ENCODE measurements at regions of chr1 and their contacts with region 1.

Region 1: GRCh38 chr1:63593303-63593885 is at the start of gene PGM1:
- DNase-seq: peak; percentile 67
- ATAC-seq: peak; percentile 79
- H3K4me3 Mint-ChIP-seq: peak within 1 kb of the TSS; percentile 97
- H3K27ac Mint-ChIP-seq: peak within 1 kb of the TSS; percentile 92
- H3K4me1 Mint-ChIP-seq: peaks cover 14% of the 10 kb centered on the region
- H3K27me3 Mint-ChIP-seq: no peaks in the 10 kb centered on the region
- CTCF ChIP-seq: no peak
- total RNA-seq, gene PGM1: 20.6 and 20.8 TPM in 2 replicates

Region 2: DNA sequence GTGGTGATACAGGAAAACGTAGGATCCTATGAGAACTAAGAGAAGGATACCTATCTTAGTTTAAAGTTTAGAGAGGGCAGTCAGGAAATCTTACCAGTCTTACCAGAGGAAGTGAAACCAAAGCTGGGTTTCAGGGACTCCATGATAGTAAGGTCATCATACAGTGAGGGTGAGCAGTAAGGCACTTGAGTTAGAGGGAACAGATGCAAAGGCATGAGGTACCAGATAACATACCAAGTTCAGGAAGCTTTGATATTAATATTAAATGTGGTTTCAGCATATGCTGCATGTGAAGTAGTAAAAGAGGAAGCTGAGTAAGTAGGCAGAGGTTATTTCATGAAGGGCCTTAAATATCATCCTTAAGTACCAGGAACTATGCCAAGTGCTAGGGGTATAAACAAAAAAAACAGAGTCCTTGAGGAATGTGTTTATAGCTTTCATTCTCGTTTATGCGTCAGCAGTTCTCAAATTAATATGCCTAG is 792.5 kb before region 1 on chr1:
- CTCF ChIA-PET with region 1: no interaction called
- POLR2A ChIA-PET with region 1: no interaction called
- intact Hi-C with region 1: loop called (anchors 5 kb)
- DNase-seq: no peak
- ATAC-seq: peak; percentile 98
- H3K4me3 Mint-ChIP-seq: peak overlapping the region; percentile 78
- H3K27ac Mint-ChIP-seq: peak overlapping the region; percentile 95
- H3K4me1 Mint-ChIP-seq: peaks cover 61% of the 10 kb centered on the region
- H3K27me3 Mint-ChIP-seq: no peaks in the 10 kb centered on the region
- CTCF ChIP-seq: no peak

Region 3: DNA sequence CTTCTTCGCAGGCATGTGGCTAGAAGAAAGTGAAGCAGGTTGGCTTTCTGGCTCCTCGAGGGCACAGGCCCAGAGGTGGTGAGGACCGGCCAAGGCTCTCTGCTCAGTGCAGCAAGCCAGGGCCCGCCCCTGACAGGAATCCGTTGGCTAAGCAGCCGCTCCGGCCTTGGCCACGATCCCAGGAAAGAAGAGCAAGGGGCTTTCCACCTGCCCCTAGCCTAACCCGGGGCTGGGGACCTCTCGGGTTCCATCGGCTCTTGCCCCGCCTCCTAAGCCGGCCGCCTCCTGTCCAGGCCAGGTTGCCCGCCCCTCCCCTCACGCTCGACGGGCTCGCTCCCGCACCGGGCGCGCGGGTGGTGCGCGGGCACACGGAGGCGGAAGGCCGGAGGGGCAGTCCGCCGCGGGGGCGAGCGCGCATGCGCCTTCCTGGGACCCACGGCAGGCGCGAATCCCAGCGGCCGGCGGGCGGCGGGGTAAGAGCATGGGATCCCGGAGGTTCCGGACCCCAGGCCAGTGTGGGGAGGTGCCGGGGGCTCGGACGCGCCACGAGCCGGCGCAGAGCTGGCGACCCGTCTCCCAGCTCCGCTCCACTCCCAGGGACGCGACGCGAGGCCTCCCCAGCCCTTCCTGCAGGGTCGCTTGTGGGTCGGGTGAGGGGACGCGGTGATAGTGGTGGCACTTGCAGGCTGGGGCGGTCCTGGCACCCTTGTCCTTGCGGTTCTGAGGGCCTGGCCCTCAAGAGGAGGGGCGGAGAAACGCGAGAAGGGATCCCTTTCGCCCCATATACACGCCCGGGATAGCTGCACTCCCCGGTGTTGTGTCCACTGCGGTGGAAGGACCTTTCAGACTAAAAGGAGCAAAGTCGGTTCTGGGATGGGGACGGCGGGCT is 225.9 kb before region 1 on chr1 and contains the start of gene ALG6:
- CTCF ChIA-PET with region 1: no interaction called
- POLR2A ChIA-PET with region 1: no interaction called
- intact Hi-C with region 1: loop called (anchors 1 kb)
- DNase-seq: peak; percentile 100
- ATAC-seq: peak; percentile 92
- H3K4me3 Mint-ChIP-seq: peak within 1 kb of the TSS; percentile 98
- H3K27ac Mint-ChIP-seq: peak within 1 kb of the TSS; percentile 86
- H3K4me1 Mint-ChIP-seq: peaks cover 21% of the 10 kb centered on the region
- H3K27me3 Mint-ChIP-seq: peaks cover 9% of the 10 kb centered on the region
- CTCF ChIP-seq: no peak
- total RNA-seq, gene ALG6: 20.0 and 21.5 TPM in 2 replicates

Region 4: DNA sequence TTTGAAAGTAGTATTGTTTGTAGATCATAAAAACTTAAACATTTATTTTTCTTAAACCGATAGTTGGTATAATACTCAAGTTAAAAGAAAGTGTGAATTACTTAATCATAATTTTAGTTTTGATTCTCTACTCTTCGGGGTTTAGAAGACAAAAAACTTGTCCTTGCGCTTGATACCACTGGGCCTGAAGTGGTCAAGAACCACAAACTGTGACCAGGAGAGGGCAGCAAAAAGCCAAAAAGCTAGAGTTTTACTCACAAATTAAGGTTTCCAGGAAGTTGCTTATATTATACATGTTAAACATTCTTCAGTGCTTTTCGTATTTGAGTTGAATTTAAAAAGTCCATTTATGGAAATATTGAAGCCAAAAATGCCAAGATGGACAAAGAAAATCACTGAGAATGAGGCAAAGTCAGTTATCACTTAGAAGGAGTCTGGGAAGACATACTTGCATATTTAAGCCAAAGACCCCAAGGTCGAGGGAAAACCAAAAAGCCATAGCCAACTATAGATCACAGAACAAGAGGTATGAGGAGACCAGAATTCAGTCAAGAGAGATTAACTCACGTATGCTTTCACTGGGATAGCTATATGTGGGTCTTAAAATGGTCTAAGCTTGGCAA is 35.9 kb before region 1 on chr1:
- CTCF ChIA-PET with region 1: no interaction called
- POLR2A ChIA-PET with region 1: no interaction called
- intact Hi-C with region 1: no loop called
- DNase-seq: no peak
- ATAC-seq: no peak
- H3K4me3 Mint-ChIP-seq: no peak overlapping the region
- H3K27ac Mint-ChIP-seq: no peak overlapping the region
- H3K4me1 Mint-ChIP-seq: no peaks in the 10 kb centered on the region
- H3K27me3 Mint-ChIP-seq: no peaks in the 10 kb centered on the region
- CTCF ChIP-seq: no peak

Region 5: DNA sequence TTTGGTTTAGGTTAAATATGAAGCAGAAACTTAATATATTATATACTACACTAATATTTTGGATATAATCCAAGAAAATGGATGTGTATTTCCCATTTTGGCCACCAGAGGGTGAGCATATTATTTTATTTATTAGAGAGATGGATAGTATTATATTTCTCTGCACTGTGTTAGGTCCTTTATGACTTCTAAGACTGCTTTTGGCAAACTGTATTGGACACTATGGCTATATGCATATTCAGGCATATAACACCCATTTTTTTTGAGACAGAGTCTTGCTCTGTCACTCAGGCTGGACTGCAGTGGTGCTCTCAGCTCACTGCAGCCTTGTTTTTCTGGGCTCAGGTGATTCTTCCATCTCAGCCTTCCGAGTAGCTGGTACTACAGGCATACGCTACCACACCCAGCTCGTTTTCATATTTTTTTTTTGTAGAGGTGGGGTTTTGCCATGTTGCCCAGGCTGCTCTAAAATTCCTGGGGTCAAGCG is 18.0 kb before region 1 on chr1:
- CTCF ChIA-PET with region 1: interaction called, 6 read pairs
- POLR2A ChIA-PET with region 1: no interaction called
- intact Hi-C with region 1: loop called (anchors 1 kb)
- DNase-seq: no peak
- ATAC-seq: no peak
- H3K4me3 Mint-ChIP-seq: no peak overlapping the region
- H3K27ac Mint-ChIP-seq: no peak overlapping the region
- H3K4me1 Mint-ChIP-seq: no peaks in the 10 kb centered on the region
- H3K27me3 Mint-ChIP-seq: no peaks in the 10 kb centered on the region
- CTCF ChIP-seq: peak; percentile 67

Region 6: DNA sequence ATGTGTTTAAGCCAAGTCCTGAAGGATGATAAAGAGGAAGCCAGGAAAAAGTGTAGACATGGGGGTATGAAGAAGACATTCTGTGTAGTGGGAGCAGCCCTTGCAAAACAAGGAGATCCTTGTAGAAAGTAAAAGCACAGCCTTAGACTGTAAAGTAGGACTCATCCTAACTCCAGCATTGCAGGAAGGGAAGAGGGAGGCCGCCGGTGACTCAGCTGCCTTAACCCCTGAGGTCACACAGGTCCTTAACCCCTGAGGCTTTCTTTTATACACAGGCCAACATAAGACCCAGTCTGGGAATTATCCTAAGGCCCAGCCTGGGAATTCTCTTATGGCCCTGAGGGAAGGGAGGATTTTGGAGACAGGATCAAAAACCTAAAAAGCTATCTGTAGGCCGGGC is 17.8 kb after region 1 on chr1:
- CTCF ChIA-PET with region 1: no interaction called
- POLR2A ChIA-PET with region 1: no interaction called
- intact Hi-C with region 1: no loop called
- DNase-seq: no peak
- ATAC-seq: no peak
- H3K4me3 Mint-ChIP-seq: no peak overlapping the region
- H3K27ac Mint-ChIP-seq: no peak overlapping the region
- H3K4me1 Mint-ChIP-seq: no peaks in the 10 kb centered on the region
- H3K27me3 Mint-ChIP-seq: no peaks in the 10 kb centered on the region
- CTCF ChIP-seq: no peak

Region 7: DNA sequence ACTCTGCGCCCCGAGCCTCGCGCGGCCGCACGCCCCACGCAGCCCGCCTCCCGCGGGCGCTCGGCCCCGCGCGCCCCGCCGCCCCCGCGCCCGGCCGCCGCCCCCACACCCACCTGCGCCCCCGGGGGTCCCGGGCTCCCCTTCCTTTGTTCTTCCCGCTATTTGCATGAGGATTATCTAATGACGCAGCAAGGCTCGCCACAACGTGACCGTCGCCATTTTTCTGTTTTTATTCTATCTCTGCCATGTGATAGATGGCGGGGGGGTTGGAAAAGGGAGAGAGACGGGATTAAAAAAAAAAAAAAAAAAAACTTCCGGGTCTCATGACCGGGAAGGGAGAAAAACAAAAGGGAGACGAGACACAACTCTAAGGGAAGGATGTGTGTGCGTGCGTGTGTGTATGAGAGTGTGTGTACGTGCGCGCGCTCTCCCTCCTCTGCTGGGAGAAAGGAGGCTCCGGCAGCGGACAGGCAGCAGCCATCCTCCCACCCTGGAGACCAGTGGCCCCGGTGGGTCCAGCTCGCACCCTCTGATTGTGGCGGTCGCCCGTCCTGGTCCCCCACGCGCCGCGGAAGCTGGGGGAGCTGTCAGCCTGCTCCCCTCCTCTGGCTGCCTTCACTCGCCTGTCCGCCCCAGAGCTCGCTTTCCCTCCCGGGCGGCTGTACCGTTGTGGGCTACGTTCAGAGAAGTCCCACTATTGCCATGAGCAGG is 1474.3 kb after region 1 on chr1:
- CTCF ChIA-PET with region 1: no interaction called
- POLR2A ChIA-PET with region 1: no interaction called
- intact Hi-C with region 1: loop called (anchors 5 kb)
- DNase-seq: peak; percentile 50
- ATAC-seq: peak; percentile 15
- H3K4me3 Mint-ChIP-seq: peak overlapping the region; percentile 97
- H3K27ac Mint-ChIP-seq: peak overlapping the region; percentile 99
- H3K4me1 Mint-ChIP-seq: peaks cover 48% of the 10 kb centered on the region
- H3K27me3 Mint-ChIP-seq: no peaks in the 10 kb centered on the region
- CTCF ChIP-seq: no peak

Measured in activated B cell treated with CpG ODN at 0.5 μM for 24 hours (primary cell).